Activated naive CD8-positive, alpha-beta T cell treated with anti-CD3 and anti-CD28 coated beads, Interleukin-2, amount 10 ng/mL, durations not matched to agents 7 days and 5 days (primary cell): ENCODE measurements at regions of chr22 and their contacts with region 1.

Region 1: GRCh38 chr22:31661851-31662656 is at the start of gene PISD:
- DNase-seq: peak; percentile 98
- ATAC-seq: peak; percentile 88
- H3K4me3 Mint-ChIP-seq: peak within 1 kb of the TSS; percentile 100
- H3K27ac Mint-ChIP-seq: peak within 1 kb of the TSS; percentile 96
- H3K4me1 Mint-ChIP-seq: peaks cover 29% of the 10 kb centered on the region
- H3K27me3 Mint-ChIP-seq: no peaks in the 10 kb centered on the region
- total RNA-seq, gene PISD: 25.4 to 26.1 TPM

Region 2: DNA sequence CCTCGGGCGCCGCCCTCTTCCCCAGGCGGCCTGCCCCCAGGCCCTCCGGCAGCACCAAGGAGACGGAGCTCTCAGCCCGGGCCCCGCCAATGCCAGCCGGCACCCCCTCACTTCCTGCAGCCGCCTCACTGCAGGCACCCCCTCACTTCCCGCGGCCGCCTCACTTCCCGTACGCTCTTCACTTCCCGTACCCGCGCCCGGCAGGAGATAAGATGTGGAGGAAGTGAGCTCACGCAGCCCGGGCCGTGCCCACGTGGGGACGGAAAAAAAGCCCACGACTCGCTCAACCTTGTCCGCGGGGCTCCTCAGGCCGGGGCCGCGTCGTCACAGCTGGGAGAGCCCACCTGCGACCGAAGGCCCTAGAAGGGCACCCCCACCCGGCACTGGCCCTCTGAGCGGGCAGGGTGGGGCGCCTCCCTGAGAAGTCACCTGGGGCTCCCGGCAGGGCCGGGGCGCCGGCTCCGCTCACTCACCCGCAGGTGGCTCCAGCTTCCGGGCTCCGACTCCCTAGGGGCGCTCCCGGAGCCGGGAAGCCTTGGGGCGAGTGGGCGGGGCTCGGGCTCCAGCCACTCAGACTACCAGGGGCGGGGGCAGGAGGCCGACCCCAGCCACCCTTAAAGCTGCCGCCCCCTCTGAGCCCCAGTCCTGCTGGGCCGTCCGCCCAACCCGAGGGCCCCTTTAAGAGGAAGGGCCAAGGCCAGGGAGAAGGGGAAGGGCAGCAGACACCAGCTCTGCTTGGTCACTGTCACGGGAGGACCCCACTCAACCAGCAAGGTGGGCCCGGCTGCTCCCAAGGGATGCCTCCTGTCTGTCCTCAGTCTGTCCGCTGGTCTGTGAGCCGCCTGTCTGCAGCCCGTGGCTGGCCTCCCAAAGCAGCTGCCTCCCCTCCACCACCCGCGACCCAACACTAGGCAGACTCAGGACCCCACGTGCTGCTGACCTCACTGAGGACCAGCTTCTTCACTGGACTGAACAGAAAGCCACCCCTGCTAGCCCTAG is 31.4 kb before region 1 on chr22:
- POLR2A ChIA-PET with region 1: interaction called, 10 read pairs
- DNase-seq: peak; percentile 85
- ATAC-seq: peak; percentile 87
- H3K4me3 Mint-ChIP-seq: peak overlapping the region; percentile 84
- H3K27ac Mint-ChIP-seq: peak overlapping the region; percentile 90
- H3K4me1 Mint-ChIP-seq: peaks cover 30% of the 10 kb centered on the region
- H3K27me3 Mint-ChIP-seq: no peaks in the 10 kb centered on the region

Region 3: DNA sequence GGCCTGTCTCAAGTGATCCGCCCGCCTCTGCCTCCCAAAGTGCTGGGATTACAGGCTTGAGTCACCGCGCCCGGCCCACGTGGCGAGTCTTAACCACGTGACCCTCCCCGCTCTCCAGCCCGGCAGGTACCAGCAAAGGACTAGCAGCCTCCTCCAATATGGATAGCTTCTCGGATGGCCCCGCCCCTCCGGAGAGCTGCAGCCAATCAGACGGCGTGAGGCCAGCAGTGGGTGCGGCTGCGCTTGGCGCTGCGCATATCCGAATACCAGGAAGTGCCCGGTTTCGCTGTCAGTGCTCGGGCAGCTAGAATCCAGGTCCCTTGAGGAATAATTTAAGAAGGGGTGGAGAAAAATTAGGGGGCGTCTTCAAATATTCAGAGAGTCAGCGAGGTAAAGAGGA is 14.6 kb after region 1 on chr22:
- POLR2A ChIA-PET with region 1: interaction called, 22 read pairs
- DNase-seq: peak; percentile 91
- ATAC-seq: peak; percentile 100
- H3K4me3 Mint-ChIP-seq: peak overlapping the region; percentile 89
- H3K27ac Mint-ChIP-seq: peak overlapping the region; percentile 94
- H3K4me1 Mint-ChIP-seq: peaks cover 11% of the 10 kb centered on the region
- H3K27me3 Mint-ChIP-seq: no peaks in the 10 kb centered on the region

Region 4: GRCh38 chr22:31715147-31715778 is 53.2 kb after region 1 on chr22:
- POLR2A ChIA-PET with region 1: no interaction called
- DNase-seq: no peak
- ATAC-seq: no peak
- H3K4me3 Mint-ChIP-seq: no peak overlapping the region
- H3K27ac Mint-ChIP-seq: no peak overlapping the region
- H3K4me1 Mint-ChIP-seq: no peaks in the 10 kb centered on the region
- H3K27me3 Mint-ChIP-seq: no peaks in the 10 kb centered on the region

Region 5: GRCh38 chr22:31753634-31754501 is 91.8 kb after region 1 on chr22 and contains the start of gene DEPDC5:
- POLR2A ChIA-PET with region 1: interaction called, 10 read pairs
- DNase-seq: peak; percentile 99
- ATAC-seq: peak; percentile 82
- H3K4me3 Mint-ChIP-seq: peak within 1 kb of the TSS; percentile 83
- H3K27ac Mint-ChIP-seq: peak within 1 kb of the TSS; percentile 99
- H3K4me1 Mint-ChIP-seq: peaks cover 39% of the 10 kb centered on the region
- H3K27me3 Mint-ChIP-seq: no peaks in the 10 kb centered on the region
- total RNA-seq, gene DEPDC5: 43.6 to 46.6 TPM